AG04449 (cell line): ENCODE measurements at regions of chr2 and their contacts with region 1.

Region 1: GRCh38 chr2:231411831-231412617 is 16.5 kb downstream of the B3GNT7 start:
- DNase-seq: no peak
- H3K4me3 ChIP-seq: peak overlapping the region; percentile 71
- CTCF ChIP-seq: peak; percentile 98

Region 2: GRCh38 chr2:229873123-229873581 is 1538.9 kb before region 1 on chr2:
- CTCF ChIA-PET with region 1: no interaction called
- POLR2A ChIA-PET with region 1: no interaction called
- DNase-seq: no peak
- H3K4me3 ChIP-seq: no peak overlapping the region
- CTCF ChIP-seq: no peak

Region 3: DNA sequence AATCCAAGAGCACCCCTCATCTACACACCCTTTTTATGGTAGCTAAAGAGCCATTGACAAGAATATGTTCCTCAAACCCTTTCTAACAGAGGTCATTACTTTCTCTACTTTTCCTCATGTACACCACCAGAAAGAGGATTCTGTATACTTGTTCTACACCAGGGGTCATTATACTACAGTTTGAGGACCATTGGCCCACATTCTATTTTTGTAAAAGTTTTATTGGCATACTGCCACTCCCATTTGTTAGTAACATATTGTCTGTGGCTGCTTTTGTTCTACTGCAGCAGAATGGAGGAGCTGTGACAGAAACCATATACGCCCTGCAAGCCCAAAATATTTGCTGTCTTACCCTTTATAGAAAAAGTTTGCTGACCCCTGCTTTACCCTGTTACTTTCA is 301.5 kb before region 1 on chr2:
- CTCF ChIA-PET with region 1: interaction called, 20 read pairs
- POLR2A ChIA-PET with region 1: no interaction called
- DNase-seq: no peak
- H3K4me3 ChIP-seq: no peak overlapping the region
- CTCF ChIP-seq: no peak

Region 4: DNA sequence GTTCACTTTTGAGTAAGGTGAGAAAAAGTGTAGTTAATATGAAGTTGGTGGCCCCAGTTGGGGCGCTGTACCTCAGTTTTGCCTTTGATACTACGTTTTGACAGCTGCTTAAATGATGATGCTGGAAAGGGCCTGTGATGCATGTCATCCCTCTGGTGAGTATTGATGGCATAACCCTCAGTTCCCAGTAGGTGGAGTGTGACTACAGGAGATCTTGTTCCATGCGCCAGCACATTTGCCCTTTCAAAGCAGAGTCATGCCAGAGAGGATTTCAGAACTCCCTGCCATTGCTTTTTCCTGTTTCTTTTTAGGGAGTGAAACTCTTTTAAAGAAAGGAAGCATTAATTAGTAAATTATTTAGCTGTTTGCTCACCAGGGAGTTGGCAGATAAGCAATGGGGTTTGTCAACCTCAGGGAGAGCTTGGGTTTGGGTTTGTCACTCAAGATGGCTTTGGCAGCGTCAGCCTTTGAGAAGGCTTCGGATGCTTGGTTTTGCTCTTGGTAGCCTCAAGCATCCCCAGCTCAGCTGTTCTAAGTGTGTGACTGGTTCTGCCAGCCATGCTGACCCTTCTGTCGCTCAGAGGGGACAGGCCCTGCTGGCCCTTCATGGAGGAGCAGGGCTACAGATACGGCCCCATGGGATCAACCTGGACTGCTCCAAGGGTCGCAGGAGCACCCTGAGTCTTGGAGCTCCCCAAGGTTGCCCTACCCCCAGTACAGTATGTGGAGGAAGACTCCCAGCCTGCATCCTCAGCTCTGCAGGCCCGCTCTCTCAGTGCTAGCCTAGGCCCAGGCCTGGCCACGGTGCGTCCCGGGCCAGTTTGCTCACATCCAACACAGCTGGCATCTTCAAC is 184.5 kb before region 1 on chr2:
- CTCF ChIA-PET with region 1: interaction called, 218 read pairs
- POLR2A ChIA-PET with region 1: no interaction called
- DNase-seq: peak; percentile 34
- H3K4me3 ChIP-seq: no peak overlapping the region
- CTCF ChIP-seq: peak; percentile 86

Region 5: GRCh38 chr2:231245253-231246094 is 166.6 kb before region 1 on chr2:
- CTCF ChIA-PET with region 1: interaction called, 21 read pairs
- POLR2A ChIA-PET with region 1: interaction called, 5 read pairs
- DNase-seq: no peak
- H3K4me3 ChIP-seq: no peak overlapping the region
- CTCF ChIP-seq: no peak

Region 6: GRCh38 chr2:231287696-231288095 is 124.3 kb before region 1 on chr2:
- CTCF ChIA-PET with region 1: interaction called, 10 read pairs
- POLR2A ChIA-PET with region 1: no interaction called
- DNase-seq: no peak
- H3K4me3 ChIP-seq: no peak overlapping the region
- CTCF ChIP-seq: no peak

Region 7: DNA sequence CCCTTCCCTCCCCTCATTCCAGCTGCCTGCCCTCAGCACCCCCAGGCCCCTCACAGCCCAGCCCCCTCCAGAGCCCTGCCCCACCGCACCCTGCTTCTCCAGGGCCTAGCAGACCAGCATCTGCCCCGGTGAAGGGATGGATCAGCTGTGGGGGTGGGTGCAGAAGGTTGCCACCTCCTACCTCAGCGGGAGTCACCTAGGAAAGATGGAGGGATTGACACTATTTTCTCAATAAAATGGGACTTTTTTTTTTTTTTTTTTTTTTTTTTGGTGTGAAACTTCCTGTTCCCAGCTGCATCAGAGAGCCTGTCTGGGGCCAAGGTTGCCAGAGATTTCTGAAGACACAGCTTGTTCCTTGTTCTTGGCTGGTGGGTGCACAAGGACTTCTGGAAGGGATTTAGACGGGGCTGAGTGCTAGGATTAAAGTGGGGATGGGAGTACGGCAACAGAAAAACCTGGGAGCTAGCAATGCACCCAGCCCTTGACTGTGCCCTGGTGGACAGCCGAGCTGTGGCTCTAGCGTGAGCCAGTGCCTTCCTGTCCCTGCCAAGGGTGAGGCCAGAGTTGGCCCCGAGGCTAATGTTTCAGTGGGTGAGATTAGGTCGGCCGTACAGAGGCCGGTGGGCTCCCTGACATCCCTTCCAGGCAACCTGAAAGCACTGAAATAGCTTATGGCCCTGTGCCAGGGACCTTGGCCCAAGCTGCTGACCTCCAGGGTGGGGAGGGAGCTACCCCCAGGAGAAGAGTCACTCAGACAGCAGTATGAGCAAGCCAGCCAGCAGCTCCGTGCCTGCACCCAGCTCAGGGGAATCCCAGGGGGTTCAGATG is 12.0 kb before region 1 on chr2:
- CTCF ChIA-PET with region 1: interaction called, 34 read pairs
- POLR2A ChIA-PET with region 1: no interaction called
- DNase-seq: no peak
- H3K4me3 ChIP-seq: no peak overlapping the region
- CTCF ChIP-seq: no peak